ENCODE measurements at regions of chr2 and their contacts with region 1.

Region 1: DNA sequence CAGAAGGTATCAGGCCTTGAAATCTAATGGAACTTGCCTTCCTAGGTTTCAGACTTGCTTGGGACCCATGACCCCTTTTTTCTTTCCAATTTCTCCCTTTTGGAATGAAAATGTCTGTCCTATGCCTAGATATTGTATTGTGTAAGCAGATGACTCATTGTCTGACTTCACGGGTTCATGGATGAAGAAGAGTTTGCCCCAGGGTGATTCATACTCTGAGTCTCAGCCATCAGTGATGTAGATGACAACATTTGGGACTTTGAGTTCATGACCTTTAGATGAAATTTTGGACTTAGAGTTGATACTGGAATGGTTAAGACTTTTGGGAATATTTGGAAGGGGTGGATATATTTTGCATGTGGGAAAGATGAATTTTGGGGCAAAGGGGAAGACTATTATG is 11.2 kb upstream of the SCYGR5 start:
- DNase-seq: no peak
- H3K4me3 ChIP-seq: no peak overlapping the region
- H3K4me3 Mint-ChIP-seq: no peak overlapping the region
- H3K27ac ChIP-seq: no peak overlapping the region
- H3K27ac Mint-ChIP-seq: no peak overlapping the region
- H3K4me1 ChIP-seq: no peaks in the 10 kb centered on the region
- H3K4me1 Mint-ChIP-seq: no peaks in the 10 kb centered on the region
- H3K27me3 ChIP-seq: no peaks in the 10 kb centered on the region
- H3K27me3 Mint-ChIP-seq: peaks cover 0 to 2% of the 10 kb centered on the region in 2 donors

Region 2: DNA sequence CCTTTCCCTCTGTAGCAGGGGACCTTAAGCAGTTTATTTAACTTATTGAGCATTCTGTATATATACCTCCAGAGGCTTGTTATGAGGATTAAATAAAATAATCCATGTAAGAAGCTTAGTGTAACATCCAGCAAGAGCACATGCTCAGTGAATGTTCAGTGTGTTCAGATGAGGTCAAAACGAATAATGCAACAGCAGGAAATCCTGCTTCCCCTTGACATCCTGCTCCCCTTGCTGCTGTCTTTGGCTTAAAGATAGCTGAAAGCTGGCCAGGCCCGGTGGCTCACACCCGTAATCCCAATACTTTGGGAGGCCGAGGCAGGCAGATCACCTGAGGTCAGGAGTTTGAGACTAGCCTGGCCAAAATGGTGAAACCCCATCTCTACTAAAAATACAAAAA is 560.1 kb before region 1 on chr2:
- CTCF ChIA-PET with region 1: no interaction called
- POLR2A ChIA-PET with region 1: no interaction called
- intact Hi-C with region 1: no loop called
- DNase-seq: no peak
- H3K4me3 ChIP-seq: no peak overlapping the region
- H3K4me3 Mint-ChIP-seq: no peak overlapping the region
- H3K27ac ChIP-seq: no peak overlapping the region
- H3K27ac Mint-ChIP-seq: no peak overlapping the region
- H3K4me1 ChIP-seq: no peaks in the 10 kb centered on the region
- H3K4me1 Mint-ChIP-seq: no peaks in the 10 kb centered on the region
- H3K27me3 ChIP-seq: no peaks in the 10 kb centered on the region
- H3K27me3 Mint-ChIP-seq: peaks cover 0 to 2% of the 10 kb centered on the region in 2 donors

Region 3: DNA sequence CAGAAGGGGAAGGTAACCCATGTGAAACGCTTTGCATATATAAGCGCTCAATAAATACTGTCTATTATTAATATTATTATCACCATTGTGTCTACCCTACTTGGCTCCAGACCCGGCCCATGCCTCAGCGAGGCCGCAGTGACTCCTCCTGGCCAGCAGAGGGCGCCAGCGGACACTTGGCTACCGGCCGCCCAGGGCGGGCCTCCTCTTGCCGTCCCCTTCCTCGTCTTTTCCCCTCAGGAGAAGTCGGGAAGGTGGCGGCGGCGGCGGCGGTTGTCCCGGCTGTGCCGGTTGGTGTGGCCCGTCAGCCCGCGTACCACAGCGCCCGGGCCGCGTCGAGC is 183.6 kb before region 1 on chr2 and contains the start of gene AGFG1:
- CTCF ChIA-PET with region 1: interaction called, 3 read pairs
- POLR2A ChIA-PET with region 1: no interaction called
- intact Hi-C with region 1: loop called (anchors 10 kb)
- DNase-seq: peak; percentile 79 to 86 (median 82)
- H3K4me3 ChIP-seq: peak within 1 kb of the TSS in 1 of 2 donors; percentile 65
- H3K4me3 Mint-ChIP-seq: peak within 1 kb of the TSS; percentile 88 to 97 (median 93)
- H3K27ac ChIP-seq: peak within 1 kb of the TSS; percentile 73
- H3K27ac Mint-ChIP-seq: peak within 1 kb of the TSS; percentile 83 to 97 (median 89)
- H3K4me1 ChIP-seq: peaks cover 51% of the 10 kb centered on the region
- H3K4me1 Mint-ChIP-seq: peaks cover 31 to 51% (median 43%) of the 10 kb centered on the region in 4 donors
- H3K27me3 ChIP-seq: no peaks in the 10 kb centered on the region
- H3K27me3 Mint-ChIP-seq: no peaks in the 10 kb centered on the region
- total RNA-seq, gene AGFG1: 56.5 to 62.4 TPM

Region 4: GRCh38 chr2:227643990-227644551 is 11.4 kb before region 1 on chr2:
- CTCF ChIA-PET with region 1: interaction called, 11 read pairs
- POLR2A ChIA-PET with region 1: interaction called, 3 read pairs
- intact Hi-C with region 1: no loop called
- DNase-seq: no peak
- H3K4me3 ChIP-seq: no peak overlapping the region
- H3K4me3 Mint-ChIP-seq: no peak overlapping the region
- H3K27ac ChIP-seq: no peak overlapping the region
- H3K27ac Mint-ChIP-seq: no peak overlapping the region
- H3K4me1 ChIP-seq: no peaks in the 10 kb centered on the region
- H3K4me1 Mint-ChIP-seq: no peaks in the 10 kb centered on the region
- H3K27me3 ChIP-seq: no peaks in the 10 kb centered on the region
- H3K27me3 Mint-ChIP-seq: peaks cover 6 to 8% of the 10 kb centered on the region in 2 donors

Region 5: GRCh38 chr2:227884511-227884947 is 229.1 kb after region 1 on chr2:
- CTCF ChIA-PET with region 1: interaction called, 16 read pairs
- POLR2A ChIA-PET with region 1: no interaction called
- intact Hi-C with region 1: no loop called
- DNase-seq: peak; percentile 36 to 49 (median 46)
- H3K4me3 ChIP-seq: no peak overlapping the region
- H3K4me3 Mint-ChIP-seq: peak overlapping the region in 1 of 8 donors; percentile 12
- H3K27ac ChIP-seq: no peak overlapping the region
- H3K27ac Mint-ChIP-seq: no peak overlapping the region
- H3K4me1 ChIP-seq: no peaks in the 10 kb centered on the region
- H3K4me1 Mint-ChIP-seq: peaks cover 0 to 10% (median 1%) of the 10 kb centered on the region in 4 donors
- H3K27me3 ChIP-seq: no peaks in the 10 kb centered on the region
- H3K27me3 Mint-ChIP-seq: peaks cover 0 to 3% of the 10 kb centered on the region in 2 donors

Region 6: GRCh38 chr2:228023619-228024018 is 368.2 kb after region 1 on chr2:
- CTCF ChIA-PET with region 1: no interaction called
- POLR2A ChIA-PET with region 1: no interaction called
- intact Hi-C with region 1: no loop called
- DNase-seq: no peak
- H3K4me3 ChIP-seq: no peak overlapping the region
- H3K4me3 Mint-ChIP-seq: no peak overlapping the region
- H3K27ac ChIP-seq: no peak overlapping the region
- H3K27ac Mint-ChIP-seq: no peak overlapping the region
- H3K4me1 ChIP-seq: no peaks in the 10 kb centered on the region
- H3K4me1 Mint-ChIP-seq: no peaks in the 10 kb centered on the region
- H3K27me3 ChIP-seq: no peaks in the 10 kb centered on the region
- H3K27me3 Mint-ChIP-seq: peaks cover 2 to 3% of the 10 kb centered on the region in 2 donors